PC-3 (cell line): ENCODE measurements at regions of chr10 and their contacts with region 1.

Region 1: DNA sequence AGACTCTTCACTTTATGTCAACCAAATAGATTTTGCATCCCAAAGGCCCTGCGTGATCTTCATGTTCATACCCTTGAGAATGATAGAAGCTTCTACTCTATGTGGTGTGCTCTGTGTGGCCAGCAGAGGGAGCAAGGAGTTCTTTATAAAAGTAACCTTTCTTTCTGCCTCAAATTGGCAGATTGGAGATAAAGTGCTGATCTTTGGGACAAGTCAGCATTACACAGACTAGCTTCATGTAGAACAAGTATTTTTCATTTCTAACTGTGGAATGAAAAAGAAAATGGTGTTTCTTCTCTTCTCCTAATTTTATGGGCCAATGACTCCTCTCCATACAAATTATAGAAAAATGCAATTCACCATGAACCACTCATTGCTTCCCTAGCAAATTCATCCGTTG is 1214.1 kb downstream of the SORCS1 start:
- DNase-seq: peak; percentile 65
- ATAC-seq: no peak
- H3K4me3 ChIP-seq: no peak overlapping the region
- H3K27ac ChIP-seq: no peak overlapping the region
- H3K4me1 ChIP-seq: 0 out of 2 replicates have a peak, but pooled peaks cover 5% of the 10 kb centered on the region
- H3K27me3 ChIP-seq: 0 out of 2 replicates have a peak, but pooled peaks cover 11% of the 10 kb centered on the region
- CTCF ChIP-seq: peak; percentile 79

Region 2: DNA sequence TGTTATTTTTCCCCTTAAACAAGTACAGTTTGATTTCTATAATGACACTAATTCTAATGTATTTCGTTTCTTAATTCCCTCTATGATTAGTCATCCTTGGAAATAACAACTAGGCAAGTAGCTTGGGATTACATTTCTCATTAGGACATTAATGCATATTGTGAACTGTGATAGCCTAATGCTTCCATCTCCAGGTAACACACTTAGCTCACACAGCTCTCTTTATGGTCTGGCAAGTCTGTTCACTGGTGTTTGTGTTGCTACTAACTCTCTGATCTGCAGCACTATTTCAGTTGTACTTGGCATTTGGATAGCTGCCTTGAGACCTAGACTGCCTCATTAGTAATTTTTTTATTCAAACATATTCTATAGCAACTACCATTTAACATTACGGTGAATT is 456.1 kb before region 1 on chr10:
- CTCF ChIA-PET with region 1: no interaction called
- POLR2A ChIA-PET with region 1: no interaction called
- intact Hi-C with region 1: no loop called
- DNase-seq: no peak
- ATAC-seq: no peak
- H3K4me3 ChIP-seq: no peak overlapping the region
- H3K27ac ChIP-seq: no peak overlapping the region
- H3K4me1 ChIP-seq: no peaks in the 10 kb centered on the region
- H3K27me3 ChIP-seq: no peaks in the 10 kb centered on the region
- CTCF ChIP-seq: no peak

Region 3: DNA sequence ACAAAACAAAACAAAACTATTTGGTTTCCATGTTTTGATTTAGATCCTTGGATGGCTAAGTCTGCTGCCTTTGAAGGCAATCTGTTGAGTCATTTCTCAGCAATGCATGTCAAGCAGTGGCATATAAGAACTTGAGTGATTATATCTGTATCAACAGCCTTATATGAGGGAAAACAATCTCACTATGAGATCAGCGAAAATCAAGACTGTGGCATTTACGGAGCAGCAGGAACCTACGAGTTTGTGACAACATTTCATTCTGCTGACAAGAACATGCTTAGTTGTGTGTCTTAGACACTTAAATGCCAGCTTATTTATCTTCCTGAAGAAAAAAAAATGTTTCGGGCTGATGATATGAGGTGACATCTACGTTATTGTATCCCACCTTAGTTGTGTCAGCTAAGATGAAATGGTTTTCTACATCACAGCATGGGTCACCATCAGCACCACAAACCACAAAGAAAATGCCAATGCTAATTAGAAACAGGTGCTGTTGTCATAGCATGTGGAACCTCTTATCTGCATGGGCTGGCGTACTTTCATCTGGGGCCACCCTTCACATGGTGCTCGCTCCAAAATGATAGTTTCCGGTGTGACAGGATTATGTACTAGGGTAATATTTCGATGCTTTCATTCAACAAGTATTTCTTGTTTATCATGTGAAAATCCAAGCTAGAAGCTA is 128.6 kb after region 1 on chr10:
- CTCF ChIA-PET with region 1: no interaction called
- POLR2A ChIA-PET with region 1: no interaction called
- intact Hi-C with region 1: no loop called
- DNase-seq: peak; percentile 22
- ATAC-seq: no peak
- H3K4me3 ChIP-seq: no peak overlapping the region
- H3K27ac ChIP-seq: no peak overlapping the region
- H3K4me1 ChIP-seq: no peaks in the 10 kb centered on the region
- H3K27me3 ChIP-seq: peaks cover 26% of the 10 kb centered on the region
- CTCF ChIP-seq: no peak

Region 4: DNA sequence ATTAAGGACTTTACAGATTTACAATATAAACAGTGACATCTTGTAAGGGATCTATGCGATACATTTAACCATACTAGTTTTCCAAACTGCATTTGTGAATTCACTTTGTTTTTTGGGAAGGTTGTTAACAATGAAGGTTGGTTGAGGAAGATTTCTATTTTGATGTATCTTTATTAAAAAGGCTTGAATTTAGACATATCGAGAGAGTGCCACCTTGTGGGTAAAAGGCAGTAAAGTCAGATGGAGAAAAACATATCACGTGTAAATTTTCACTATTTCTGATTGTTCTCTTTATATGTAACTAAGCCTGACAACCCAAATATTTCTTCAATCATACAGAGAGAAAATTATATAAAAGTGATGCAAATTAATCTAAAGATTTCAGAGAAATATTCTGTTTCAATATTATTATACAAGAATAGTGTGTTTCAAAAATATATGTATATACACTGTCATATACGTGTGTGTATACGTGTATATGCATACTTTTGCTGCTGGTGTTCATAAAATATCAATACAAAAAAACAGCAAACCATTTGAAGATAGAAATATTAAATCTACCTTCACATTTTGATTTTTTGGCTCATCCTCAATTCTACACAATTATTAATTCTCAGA is 225.5 kb after region 1 on chr10:
- CTCF ChIA-PET with region 1: no interaction called
- POLR2A ChIA-PET with region 1: no interaction called
- intact Hi-C with region 1: loop called (anchors 2 kb)
- DNase-seq: peak; percentile 55
- ATAC-seq: no peak
- H3K4me3 ChIP-seq: peak overlapping the region; percentile 52
- H3K27ac ChIP-seq: no peak overlapping the region
- H3K4me1 ChIP-seq: no peaks in the 10 kb centered on the region
- H3K27me3 ChIP-seq: peaks cover 21% of the 10 kb centered on the region
- CTCF ChIP-seq: peak; percentile 67